CD4-positive, alpha-beta T cell (primary cell): ENCODE measurements at regions of chr14 and their contacts with region 1.

Region 1: DNA sequence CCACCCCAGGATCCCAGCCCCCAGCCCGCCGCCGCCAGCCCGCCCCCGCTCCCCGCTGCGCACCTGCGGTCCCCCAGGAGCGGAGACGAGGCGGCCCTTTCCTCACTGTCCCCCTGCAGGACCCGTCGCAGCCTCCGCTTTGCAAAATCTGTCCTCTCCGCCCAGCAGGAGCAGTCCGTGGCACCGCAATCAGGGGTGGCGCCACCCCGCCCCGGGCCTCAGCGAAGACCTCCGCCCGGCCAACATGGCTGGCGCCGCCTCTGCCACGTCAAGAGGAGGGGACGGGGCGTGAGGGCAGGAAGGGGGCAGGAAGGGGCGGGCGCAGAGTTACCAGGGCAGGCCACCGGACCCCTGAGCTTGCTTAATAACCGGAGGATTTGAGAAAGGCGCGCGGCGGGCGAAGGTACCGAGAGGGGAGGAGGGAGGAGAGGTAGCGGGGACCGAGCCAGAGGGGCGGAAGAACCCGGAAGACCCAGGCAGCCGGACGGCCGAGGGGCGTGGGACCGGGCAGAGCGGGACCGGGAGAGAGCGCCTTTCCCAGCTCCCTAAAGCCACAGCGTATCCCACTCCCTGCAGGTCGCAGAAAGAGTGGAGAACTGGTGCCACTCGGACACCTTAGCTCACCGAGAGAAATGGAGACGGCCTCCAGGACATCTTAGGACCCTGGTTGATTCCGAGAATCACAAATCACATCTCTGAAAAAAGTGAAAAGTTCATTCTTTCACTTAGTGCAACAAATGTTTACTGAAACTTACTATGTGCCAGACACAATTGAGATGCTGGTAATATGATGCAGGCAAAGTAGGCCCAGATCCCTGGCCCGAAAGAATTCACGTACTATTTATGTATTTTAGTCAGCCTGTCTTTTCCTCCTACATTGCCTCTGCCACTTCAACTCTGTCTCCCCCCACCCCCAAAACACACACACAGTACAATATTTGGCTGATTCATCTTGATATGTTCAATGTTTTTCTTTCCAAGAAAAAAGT is at the start of gene SEC23A:
- DNase-seq: peak; percentile 62 to 91 (median 78)
- ATAC-seq: peak; percentile 95
- H3K4me3 ChIP-seq: peak within 1 kb of the TSS; percentile 100
- H3K4me3 Mint-ChIP-seq: peak within 1 kb of the TSS; percentile 98
- H3K27ac ChIP-seq: peak within 1 kb of the TSS; percentile 83 to 96
- H3K27ac Mint-ChIP-seq: peak within 1 kb of the TSS; percentile 98
- H3K4me1 ChIP-seq: peaks cover 34% of the 10 kb centered on the region
- H3K4me1 Mint-ChIP-seq: peaks cover 56% of the 10 kb centered on the region
- H3K27me3 ChIP-seq: no peaks in the 10 kb centered on the region
- H3K27me3 Mint-ChIP-seq: no peaks in the 10 kb centered on the region
- CTCF ChIP-seq: no peak
- total RNA-seq, gene SEC23A: 68.4 to 82.1 TPM

Region 2: GRCh38 chr14:38646391-38646790 is 456.9 kb before region 1 on chr14:
- CTCF ChIA-PET with region 1: no interaction called
- POLR2A ChIA-PET with region 1: no interaction called
- intact Hi-C with region 1: no loop called
- DNase-seq: no peak
- ATAC-seq: no peak
- H3K4me3 ChIP-seq: no peak overlapping the region
- H3K4me3 Mint-ChIP-seq: no peak overlapping the region
- H3K27ac ChIP-seq: no peak overlapping the region
- H3K27ac Mint-ChIP-seq: no peak overlapping the region
- H3K4me1 ChIP-seq: no peaks in the 10 kb centered on the region
- H3K4me1 Mint-ChIP-seq: no peaks in the 10 kb centered on the region
- H3K27me3 ChIP-seq: no peaks in the 10 kb centered on the region
- H3K27me3 Mint-ChIP-seq: no peaks in the 10 kb centered on the region
- CTCF ChIP-seq: no peak

Region 3: GRCh38 chr14:38669027-38669426 is 434.2 kb before region 1 on chr14:
- CTCF ChIA-PET with region 1: no interaction called
- POLR2A ChIA-PET with region 1: no interaction called
- intact Hi-C with region 1: no loop called
- DNase-seq: no peak
- ATAC-seq: no peak
- H3K4me3 ChIP-seq: no peak overlapping the region
- H3K4me3 Mint-ChIP-seq: no peak overlapping the region
- H3K27ac ChIP-seq: no peak overlapping the region
- H3K27ac Mint-ChIP-seq: no peak overlapping the region
- H3K4me1 ChIP-seq: no peaks in the 10 kb centered on the region
- H3K4me1 Mint-ChIP-seq: no peaks in the 10 kb centered on the region
- H3K27me3 ChIP-seq: no peaks in the 10 kb centered on the region
- H3K27me3 Mint-ChIP-seq: no peaks in the 10 kb centered on the region
- CTCF ChIP-seq: no peak

Region 4: DNA sequence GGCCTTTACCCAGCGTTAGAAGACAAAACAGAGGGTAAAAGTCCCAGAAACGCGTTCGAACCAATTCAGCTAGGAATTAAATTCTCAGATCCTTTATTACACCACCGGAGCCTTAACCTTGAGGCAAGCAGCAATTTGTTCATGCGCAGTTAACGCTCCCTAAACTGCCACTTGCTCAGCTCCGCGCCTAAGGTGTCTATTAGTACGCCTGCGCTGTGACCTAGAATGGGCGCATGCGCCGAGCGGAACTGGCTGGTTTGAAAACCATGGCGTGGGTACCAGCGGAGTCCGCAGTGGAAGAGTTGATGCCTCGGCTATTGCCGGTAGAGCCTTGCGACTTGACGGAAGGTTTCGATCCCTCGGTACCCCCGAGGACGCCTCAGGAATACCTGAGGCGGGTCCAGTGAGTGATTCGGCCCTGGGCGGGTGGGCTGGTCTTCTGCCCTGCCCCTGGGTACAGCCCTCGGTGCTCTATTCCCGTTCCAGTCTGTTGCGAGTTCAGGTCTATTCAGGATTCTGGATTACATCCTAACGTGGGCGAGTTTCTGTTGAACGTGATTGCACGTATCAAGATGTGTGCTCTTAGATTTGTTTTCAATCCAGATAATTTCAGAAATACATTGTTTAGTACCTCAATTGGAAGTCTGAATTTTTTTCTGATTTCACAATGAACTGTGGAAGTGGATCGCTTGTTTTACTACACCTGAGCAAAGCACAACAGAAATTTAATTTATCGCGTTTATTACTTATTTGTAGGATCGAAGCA is 11.0 kb after region 1 on chr14 and contains the start of gene GEMIN2:
- CTCF ChIA-PET with region 1: interaction called, 10 read pairs
- POLR2A ChIA-PET with region 1: interaction called, 59 read pairs
- intact Hi-C with region 1: loop called in 1 of 2 experiments (anchors 1 kb)
- DNase-seq: peak; percentile 85 to 98 (median 92)
- ATAC-seq: peak; percentile 98
- H3K4me3 ChIP-seq: peak within 1 kb of the TSS; percentile 72
- H3K4me3 Mint-ChIP-seq: peak within 1 kb of the TSS; percentile 99
- H3K27ac ChIP-seq: peak within 1 kb of the TSS; percentile 55 to 65
- H3K27ac Mint-ChIP-seq: peak within 1 kb of the TSS; percentile 91
- H3K4me1 ChIP-seq: peaks cover 6% of the 10 kb centered on the region
- H3K4me1 Mint-ChIP-seq: peaks cover 17% of the 10 kb centered on the region
- H3K27me3 ChIP-seq: no peaks in the 10 kb centered on the region
- H3K27me3 Mint-ChIP-seq: no peaks in the 10 kb centered on the region
- CTCF ChIP-seq: no peak
- total RNA-seq, gene GEMIN2: 14.6 to 16.1 TPM

Region 5: DNA sequence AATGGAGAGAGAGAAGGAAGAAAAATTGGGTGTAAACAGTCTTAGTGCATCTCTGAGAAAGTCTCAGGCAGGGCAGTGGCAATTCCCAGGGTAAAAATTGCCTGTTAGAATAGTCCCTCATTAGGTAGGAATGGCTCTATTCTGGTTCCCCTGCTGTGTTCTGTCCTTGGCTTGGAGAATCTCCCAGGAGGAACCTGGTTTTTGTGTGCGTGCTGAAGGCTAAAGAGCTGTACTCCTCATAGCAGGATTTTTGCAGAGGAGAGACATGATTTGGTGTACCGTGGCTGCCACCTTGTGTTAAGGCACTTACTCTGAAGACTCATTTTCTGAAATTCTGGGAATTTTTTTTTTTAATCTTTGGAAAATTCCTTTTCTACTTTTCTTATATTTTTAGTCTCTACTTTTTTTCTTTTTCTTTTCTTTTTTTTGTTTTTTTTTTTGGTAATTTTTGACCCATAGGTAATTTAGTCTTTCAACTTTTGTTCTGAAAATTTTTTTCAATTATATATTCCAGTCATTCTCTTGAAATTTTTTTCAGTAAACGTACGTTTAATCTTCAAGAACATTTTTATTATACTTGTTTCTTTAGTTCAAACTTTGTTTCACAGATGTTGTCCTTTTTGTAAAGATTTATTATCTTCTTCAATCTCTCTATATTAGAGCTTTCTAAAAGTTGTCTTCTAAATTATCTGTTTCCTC is 265.1 kb after region 1 on chr14:
- CTCF ChIA-PET with region 1: no interaction called
- POLR2A ChIA-PET with region 1: no interaction called
- intact Hi-C with region 1: loop called (anchors 2 to 5 kb)
- DNase-seq: peak in 9 of 14 experiments; percentile 5 to 44 (median 15)
- ATAC-seq: no peak
- H3K4me3 ChIP-seq: no peak overlapping the region
- H3K4me3 Mint-ChIP-seq: no peak overlapping the region
- H3K27ac ChIP-seq: no peak overlapping the region
- H3K27ac Mint-ChIP-seq: peak overlapping the region; percentile 13
- H3K4me1 ChIP-seq: no peaks in the 10 kb centered on the region
- H3K4me1 Mint-ChIP-seq: no peaks in the 10 kb centered on the region
- H3K27me3 ChIP-seq: no peaks in the 10 kb centered on the region
- H3K27me3 Mint-ChIP-seq: no peaks in the 10 kb centered on the region
- CTCF ChIP-seq: no peak